Aorta (tissue), 5 donors: ENCODE measurements at regions of chr19 and their contacts with region 1.

Region 1: GRCh38 chr19:37077934-37078725 is at the start of gene ZNF420:
- DNase-seq: peak; percentile 96 to 97
- ATAC-seq: peak; percentile 100
- H3K4me3 ChIP-seq: peak within 1 kb of the TSS; percentile 46 to 91
- H3K27ac ChIP-seq: peak within 1 kb of the TSS in 1 of 2 donors; percentile 55
- H3K4me1 ChIP-seq: peaks cover 4 to 7% of the 10 kb centered on the region in 2 donors
- H3K27me3 ChIP-seq: no peaks in the 10 kb centered on the region
- total RNA-seq, gene ZNF420: 9.2 to 11.8 TPM

Region 2: GRCh38 chr19:37095859-37096258 is 17.7 kb after region 1 on chr19:
- intact Hi-C with region 1: no loop called
- DNase-seq: no peak
- ATAC-seq: no peak
- H3K4me3 ChIP-seq: no peak overlapping the region
- H3K27ac ChIP-seq: no peak overlapping the region
- H3K4me1 ChIP-seq: no peaks in the 10 kb centered on the region
- H3K27me3 ChIP-seq: no peaks in the 10 kb centered on the region

Region 3: DNA sequence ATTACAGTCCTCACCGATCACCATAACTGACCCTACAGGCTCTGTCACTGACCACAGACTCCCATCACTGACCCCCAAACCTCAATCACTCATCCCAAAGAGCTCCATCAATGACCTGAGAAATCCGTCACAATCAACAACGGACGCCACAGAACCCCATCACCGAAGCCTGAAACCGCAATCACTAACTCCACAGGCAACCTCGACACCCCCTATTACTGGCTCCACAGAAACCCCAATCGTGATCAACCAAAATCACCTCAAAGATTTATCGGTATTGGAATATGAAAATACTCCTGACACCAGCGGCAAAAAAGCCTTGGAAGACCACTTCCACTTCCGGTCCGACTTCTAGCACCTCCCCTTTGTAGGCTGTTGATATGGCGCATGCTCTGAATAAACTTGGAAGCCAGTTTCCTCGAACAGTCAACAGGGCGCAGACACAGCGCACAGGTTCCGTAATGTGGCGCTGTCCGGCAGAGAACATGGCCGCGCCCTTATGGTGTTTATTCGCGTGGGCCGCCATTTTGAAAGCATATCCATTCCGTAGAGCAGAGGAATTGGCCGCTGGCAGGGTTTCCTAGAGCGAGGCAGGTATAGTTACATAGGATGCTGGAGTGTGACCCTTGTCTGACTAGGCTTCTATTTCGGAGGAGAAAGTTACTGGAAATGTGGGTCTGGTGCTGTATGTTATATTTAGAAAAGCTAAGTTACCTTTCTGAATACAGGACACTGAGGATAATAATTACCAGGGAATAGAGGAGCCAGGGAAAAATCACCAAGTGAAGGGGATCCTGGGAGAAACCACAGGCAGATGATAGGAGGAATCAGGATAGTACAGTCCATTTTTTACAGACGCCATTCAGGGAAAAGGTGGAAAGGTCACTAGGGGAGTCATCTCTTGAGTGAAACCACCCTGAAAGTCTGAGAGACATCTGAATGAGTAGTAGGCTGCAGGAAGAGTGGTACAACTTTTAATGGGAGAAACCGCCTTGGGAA is 94.5 kb after region 1 on chr19 and contains the start of gene ZNF585A:
- intact Hi-C with region 1: loop called in 1 of 2 experiments (anchors 10 kb)
- DNase-seq: peak; percentile 95
- ATAC-seq: peak; percentile 100
- H3K4me3 ChIP-seq: peak within 1 kb of the TSS; percentile 63 to 100
- H3K27ac ChIP-seq: peak within 1 kb of the TSS in 1 of 2 donors; percentile 64
- H3K4me1 ChIP-seq: no peaks in the 10 kb centered on the region
- H3K27me3 ChIP-seq: no peaks in the 10 kb centered on the region
- total RNA-seq, gene ZNF585A: 8.6 to 15.1 TPM

Region 4: GRCh38 chr19:37309834-37310575 is 231.9 kb after region 1 on chr19:
- intact Hi-C with region 1: loop called in 1 of 2 experiments (anchors 10 kb)
- DNase-seq: no peak
- ATAC-seq: no peak
- H3K4me3 ChIP-seq: no peak overlapping the region
- H3K27ac ChIP-seq: no peak overlapping the region
- H3K4me1 ChIP-seq: peaks cover 0 to 1% of the 10 kb centered on the region in 2 donors
- H3K27me3 ChIP-seq: no peaks in the 10 kb centered on the region

Region 5: GRCh38 chr19:37362733-37363132 is 284.6 kb after region 1 on chr19:
- intact Hi-C with region 1: no loop called
- DNase-seq: no peak
- ATAC-seq: peak; percentile 36
- H3K4me3 ChIP-seq: no peak overlapping the region
- H3K27ac ChIP-seq: no peak overlapping the region
- H3K4me1 ChIP-seq: no peaks in the 10 kb centered on the region
- H3K27me3 ChIP-seq: no peaks in the 10 kb centered on the region